AG04449 (cell line): ENCODE measurements at regions of chr3 and their contacts with region 1.

Region 1: GRCh38 chr3:123723522-123724168 is 138.8 kb upstream of the HACD2 start:
- DNase-seq: no peak
- H3K4me3 ChIP-seq: no peak overlapping the region
- CTCF ChIP-seq: peak; percentile 84

Region 2: DNA sequence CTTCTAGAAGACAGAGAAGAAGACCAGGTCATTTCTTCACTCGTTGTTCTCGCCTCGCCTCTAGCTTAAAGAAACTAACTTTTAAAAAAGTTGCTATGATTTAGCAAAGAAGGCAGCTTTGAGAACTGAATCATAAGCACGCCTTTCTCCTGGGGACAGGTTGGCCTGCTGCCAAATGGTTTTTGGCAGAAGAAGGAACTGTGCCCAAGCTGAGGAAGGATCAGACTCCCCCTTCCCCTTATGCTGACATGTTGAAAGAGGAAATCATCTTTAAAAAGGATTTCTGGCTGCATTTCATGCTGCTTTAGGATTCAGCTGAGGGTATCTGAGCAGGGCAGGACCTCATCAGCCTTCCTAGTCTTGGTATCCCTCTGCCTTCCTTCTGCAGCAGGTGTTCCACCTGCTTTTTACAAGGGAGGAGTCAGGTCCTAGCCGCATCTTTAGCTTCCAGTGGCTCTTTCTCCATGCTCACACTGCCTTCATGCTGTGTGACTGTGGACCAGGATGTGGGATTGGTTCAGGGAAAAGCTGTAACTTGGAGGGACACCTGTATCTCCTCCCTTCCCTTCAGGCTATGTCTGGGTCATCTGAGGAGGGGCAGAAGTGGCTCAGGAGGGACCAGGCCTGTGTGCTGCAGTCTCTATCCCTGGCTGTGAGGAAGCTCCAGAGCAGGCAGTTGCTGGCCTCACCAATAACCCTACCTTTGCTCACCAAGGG is 104.7 kb before region 1 on chr3:
- CTCF ChIA-PET with region 1: interaction called, 12 read pairs
- POLR2A ChIA-PET with region 1: no interaction called
- DNase-seq: peak; percentile 46
- H3K4me3 ChIP-seq: peak overlapping the region; percentile 57
- CTCF ChIP-seq: no peak

Region 3: DNA sequence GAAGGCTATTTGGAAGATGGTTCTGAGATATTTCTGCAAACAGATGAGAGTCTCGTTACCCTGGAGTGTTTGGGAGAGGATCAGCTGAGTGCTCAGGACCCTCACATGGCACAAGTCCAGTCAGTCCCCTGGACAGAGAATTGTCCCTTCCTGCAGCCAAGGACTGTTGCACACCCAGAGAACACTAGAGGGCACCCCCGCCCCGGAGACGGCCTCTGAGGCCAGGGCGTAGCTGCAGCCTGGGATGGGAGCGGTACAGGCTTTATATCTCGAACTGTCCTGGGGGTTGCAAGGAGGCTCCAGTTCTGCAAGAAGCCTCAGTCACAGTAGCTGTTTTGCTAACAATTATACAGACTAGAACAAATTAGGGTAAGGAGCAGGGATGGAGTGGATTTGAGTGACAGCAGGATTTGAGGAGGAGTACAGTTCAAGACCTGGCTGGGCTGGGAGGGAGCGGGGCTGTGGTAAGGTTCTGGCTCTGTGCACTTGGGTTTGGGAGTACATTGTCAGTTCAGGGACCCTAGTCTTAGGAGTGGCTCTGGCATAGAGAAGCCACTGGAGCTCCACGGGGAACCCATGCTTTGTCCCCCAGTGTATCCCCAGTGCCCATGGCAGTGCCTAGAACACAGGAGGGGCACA is 71.2 kb before region 1 on chr3:
- CTCF ChIA-PET with region 1: interaction called, 512 read pairs
- POLR2A ChIA-PET with region 1: interaction called, 7 read pairs
- DNase-seq: no peak
- H3K4me3 ChIP-seq: no peak overlapping the region
- CTCF ChIP-seq: peak; percentile 97

Region 4: DNA sequence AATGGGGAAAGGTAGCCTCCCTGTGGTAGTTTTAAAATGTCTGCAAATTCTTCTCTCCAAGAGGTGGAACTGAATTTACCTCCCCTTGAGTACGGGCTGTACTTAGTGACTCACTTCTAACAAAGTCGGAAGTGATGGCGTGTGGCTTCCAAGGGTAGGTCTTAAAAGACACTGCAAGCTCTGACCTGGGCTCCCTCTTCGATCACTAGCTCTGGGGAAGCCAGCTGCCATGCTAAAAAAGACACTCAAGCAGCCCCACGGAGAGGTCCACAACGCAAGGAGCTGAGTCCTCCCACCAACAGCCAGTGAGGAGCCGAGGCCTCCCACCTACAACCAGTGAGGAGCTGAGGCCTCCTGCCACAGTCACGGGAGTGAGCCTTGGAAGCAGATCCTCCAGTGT is 16.8 kb before region 1 on chr3:
- CTCF ChIA-PET with region 1: interaction called, 71 read pairs
- POLR2A ChIA-PET with region 1: no interaction called
- DNase-seq: no peak
- H3K4me3 ChIP-seq: no peak overlapping the region
- CTCF ChIP-seq: no peak

Region 5: GRCh38 chr3:123745184-123745855 is 21.7 kb after region 1 on chr3:
- CTCF ChIA-PET with region 1: interaction called, 40 read pairs
- POLR2A ChIA-PET with region 1: interaction called, 3 read pairs
- DNase-seq: no peak
- H3K4me3 ChIP-seq: no peak overlapping the region
- CTCF ChIP-seq: no peak

Region 6: GRCh38 chr3:123837858-123838257 is 114.2 kb after region 1 on chr3:
- CTCF ChIA-PET with region 1: no interaction called
- POLR2A ChIA-PET with region 1: no interaction called
- DNase-seq: no peak
- H3K4me3 ChIP-seq: no peak overlapping the region
- CTCF ChIP-seq: no peak

Region 7: DNA sequence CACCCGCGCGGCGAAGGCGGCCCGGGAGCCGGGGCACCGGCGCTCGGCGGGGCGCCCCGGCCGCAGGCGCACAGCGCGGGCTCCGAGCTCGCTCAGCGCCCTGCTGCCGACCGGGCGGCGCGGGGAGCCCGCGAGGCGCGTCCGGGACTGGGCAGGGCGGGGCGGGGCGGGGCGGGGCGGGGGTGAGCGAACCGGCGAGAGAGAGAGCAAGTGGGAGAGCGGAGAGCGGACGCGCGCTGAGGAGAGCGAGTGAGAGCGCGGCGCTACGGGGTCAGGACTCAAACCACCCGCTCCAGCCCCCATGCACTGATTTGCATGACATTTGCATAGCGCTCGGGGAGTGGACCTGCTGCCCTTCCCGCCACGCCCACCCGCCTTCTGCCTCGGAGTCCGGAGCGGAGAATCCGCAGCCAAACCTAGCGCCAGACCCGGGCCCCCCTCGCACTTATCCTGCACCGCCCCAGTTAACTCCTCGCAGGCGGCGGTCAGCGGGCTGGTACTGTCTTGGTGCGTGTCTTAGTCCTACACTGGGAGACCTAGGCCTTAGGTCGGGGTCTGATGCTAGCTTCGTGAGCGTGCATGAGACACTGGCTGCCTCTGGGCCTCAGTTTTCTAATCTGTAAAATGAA is 160.7 kb after region 1 on chr3 and contains the start of gene MYLK:
- CTCF ChIA-PET with region 1: interaction called, 20 read pairs
- POLR2A ChIA-PET with region 1: no interaction called
- DNase-seq: peak; percentile 42
- H3K4me3 ChIP-seq: peak within 1 kb of the TSS; percentile 74
- CTCF ChIP-seq: no peak